Motor neuron (in vitro differentiated cells): ENCODE measurements at regions of chr10 and their contacts with region 1.

Region 1: GRCh38 chr10:128274938-128275337 is 148.7 kb upstream of the MKI67 start:
- ATAC-seq: peak in 6 of 8 experiments; percentile 38 to 56 (median 46)
- H3K4me3 ChIP-seq: no peak overlapping the region
- H3K27ac ChIP-seq: no peak overlapping the region
- H3K4me1 ChIP-seq: peaks cover 2 to 6% of the 10 kb centered on the region in 2 donors

Region 2: GRCh38 chr10:128411624-128412023 is 136.7 kb after region 1 on chr10:
- in situ Hi-C with region 1: no loop called
- ATAC-seq: no peak
- H3K4me3 ChIP-seq: no peak overlapping the region
- H3K27ac ChIP-seq: no peak overlapping the region
- H3K4me1 ChIP-seq: no peaks in the 10 kb centered on the region

Region 3: GRCh38 chr10:129993621-129994020 is 1718.7 kb after region 1 on chr10:
- in situ Hi-C with region 1: loop called in 2 of 9 experiments (anchors 25 kb)
- ATAC-seq: peak in 2 of 8 experiments; percentile 18 to 74
- H3K4me3 ChIP-seq: no peak overlapping the region
- H3K27ac ChIP-seq: no peak overlapping the region
- H3K4me1 ChIP-seq: no peaks in the 10 kb centered on the region